Common myeloid progenitor, CD34-positive (primary cell): ENCODE measurements at regions of chr13 and their contacts with region 1.

Region 1: GRCh38 chr13:27339299-27339698 is 68.7 kb downstream of the RASL11A start:
- DNase-seq: peak; percentile 52 to 68 (median 67)
- H3K4me3 ChIP-seq: no peak overlapping the region
- H3K27ac ChIP-seq: no peak overlapping the region
- H3K4me1 ChIP-seq: peaks cover 0 to 5% (median 0%) of the 10 kb centered on the region in 4 experiments
- H3K27me3 ChIP-seq: peaks cover 0 to 1% (median 0%) of the 10 kb centered on the region in 5 experiments

Region 2: GRCh38 chr13:27353166-27353583 is 13.9 kb after region 1 on chr13:
- CTCF ChIA-PET with region 1: interaction called, 18 read pairs
- POLR2A ChIA-PET with region 1: no interaction called
- DNase-seq: no peak
- H3K4me3 ChIP-seq: no peak overlapping the region
- H3K27ac ChIP-seq: no peak overlapping the region
- H3K4me1 ChIP-seq: no peaks in the 10 kb centered on the region
- H3K27me3 ChIP-seq: peaks cover 0 to 3% (median 0%) of the 10 kb centered on the region in 5 experiments